GM12878 (cell line): ENCODE measurements at regions of chr6 and their contacts with region 1.

Region 1: DNA sequence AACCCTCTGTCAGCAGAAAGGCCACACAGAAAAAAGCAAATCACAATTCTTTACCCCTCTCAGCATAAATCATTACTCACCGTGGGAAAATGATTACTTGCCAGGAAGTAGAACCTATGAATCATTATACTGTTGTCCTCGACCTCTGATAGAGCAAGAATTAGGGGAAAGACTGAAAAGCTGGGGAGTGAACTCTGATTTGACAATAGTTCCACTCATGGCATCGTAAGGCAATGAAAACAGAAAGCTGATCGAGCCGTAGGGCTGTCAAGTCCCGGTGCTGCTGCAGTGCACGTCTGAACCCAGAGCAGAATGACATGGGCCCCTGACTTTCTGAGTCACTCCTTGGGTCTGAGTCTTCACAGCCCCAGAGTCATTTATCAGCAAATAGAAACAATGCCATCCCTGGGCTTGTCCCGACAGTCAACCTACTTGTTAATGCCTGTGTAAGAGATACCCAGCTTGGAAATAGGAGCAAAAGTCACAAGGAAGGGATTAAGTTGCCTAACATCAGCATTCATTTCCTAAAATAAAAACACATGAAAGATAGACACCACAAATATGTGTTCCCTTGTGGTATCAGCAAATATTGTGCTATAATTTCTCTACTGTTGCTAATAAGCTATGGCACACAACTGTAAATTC is 224.8 kb upstream of the MARCKS start:
- DNase-seq: peak; percentile 91
- ATAC-seq: peak; percentile 54
- H3K4me3 ChIP-seq: peak overlapping the region; percentile 19; the same call in 1 of the 2 replicates
- H3K27ac ChIP-seq: peak overlapping the region; percentile 100
- H3K4me1 ChIP-seq: peaks cover 77% of the 10 kb centered on the region
- H3K27me3 ChIP-seq: no peaks in the 10 kb centered on the region
- CTCF ChIP-seq: no peak
- EP300 ChIP-seq: 0 out of 4 replicates have a peak, but pooled peaks of 1 of the 2 experiments have one; percentile 50
- POLR2A ChIP-seq: peak; percentile 88
- RAD21 ChIP-seq: 0 out of 2 replicates have a peak, but pooled peaks have one; percentile 1

Region 2: GRCh38 chr6:111841822-111842221 is 1790.5 kb before region 1 on chr6:
- CTCF ChIA-PET with region 1: no interaction called
- POLR2A ChIA-PET with region 1: no interaction called
- RAD21 ChIA-PET with region 1: no interaction called
- SMC1A ChIA-PET with region 1: no interaction called
- in situ Hi-C with region 1: loop called (anchors 25 kb)
- intact Hi-C with region 1: no loop called
- DNase-seq: peak; percentile 60
- ATAC-seq: no peak
- H3K4me3 ChIP-seq: no peak overlapping the region; the same call in 1 of the 2 replicates
- H3K27ac ChIP-seq: peak overlapping the region; percentile 72
- H3K4me1 ChIP-seq: peaks cover 82% of the 10 kb centered on the region
- H3K27me3 ChIP-seq: no peaks in the 10 kb centered on the region
- CTCF ChIP-seq: no peak
- EP300 ChIP-seq: peak; percentile 36 to 52; a peak in 2 of 4 replicates
- POLR2A ChIP-seq: no peak
- RAD21 ChIP-seq: no peak

Region 3: GRCh38 chr6:113292646-113293422 is 339.5 kb before region 1 on chr6:
- CTCF ChIA-PET with region 1: no interaction called
- POLR2A ChIA-PET with region 1: interaction called, 3 read pairs
- RAD21 ChIA-PET with region 1: interaction called, 14 read pairs
- SMC1A ChIA-PET with region 1: interaction called, 6 read pairs
- in situ Hi-C with region 1: no loop called
- intact Hi-C with region 1: loop called (anchors 5 kb)
- DNase-seq: peak; percentile 31
- ATAC-seq: peak; percentile 96
- H3K4me3 ChIP-seq: no peak overlapping the region
- H3K27ac ChIP-seq: no peak overlapping the region
- H3K4me1 ChIP-seq: no peaks in the 10 kb centered on the region; the same call in 1 of the 2 replicates
- H3K27me3 ChIP-seq: no peaks in the 10 kb centered on the region
- CTCF ChIP-seq: no peak
- EP300 ChIP-seq: peak; percentile 58 to 70; a peak in 2 of 4 replicates
- POLR2A ChIP-seq: no peak
- RAD21 ChIP-seq: no peak

Region 4: DNA sequence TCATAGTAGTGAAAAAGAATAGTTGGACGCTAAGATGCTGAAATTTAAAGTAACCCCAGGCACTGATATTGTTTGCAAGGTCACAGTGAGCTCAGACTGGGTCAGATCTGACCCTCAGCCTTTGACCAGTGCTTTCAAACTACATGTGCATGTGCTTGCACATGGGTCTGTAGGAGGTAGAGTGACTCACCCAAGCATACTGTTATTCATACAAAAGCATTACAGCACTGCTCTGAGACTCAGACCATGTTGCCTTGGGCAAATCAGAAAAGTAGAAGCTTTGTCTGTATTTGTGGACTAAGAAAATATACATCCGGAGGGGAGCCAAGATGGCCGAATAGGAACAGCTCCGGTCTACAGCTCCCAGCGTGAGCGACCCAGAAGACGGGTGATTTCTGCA is 101.5 kb before region 1 on chr6:
- CTCF ChIA-PET with region 1: no interaction called
- POLR2A ChIA-PET with region 1: no interaction called
- RAD21 ChIA-PET with region 1: no interaction called
- SMC1A ChIA-PET with region 1: no interaction called
- in situ Hi-C with region 1: no loop called
- intact Hi-C with region 1: no loop called
- DNase-seq: no peak
- ATAC-seq: no peak
- H3K4me3 ChIP-seq: no peak overlapping the region
- H3K27ac ChIP-seq: no peak overlapping the region
- H3K4me1 ChIP-seq: no peaks in the 10 kb centered on the region
- H3K27me3 ChIP-seq: no peaks in the 10 kb centered on the region
- CTCF ChIP-seq: no peak
- EP300 ChIP-seq: no peak
- POLR2A ChIP-seq: no peak
- RAD21 ChIP-seq: no peak

Region 5: DNA sequence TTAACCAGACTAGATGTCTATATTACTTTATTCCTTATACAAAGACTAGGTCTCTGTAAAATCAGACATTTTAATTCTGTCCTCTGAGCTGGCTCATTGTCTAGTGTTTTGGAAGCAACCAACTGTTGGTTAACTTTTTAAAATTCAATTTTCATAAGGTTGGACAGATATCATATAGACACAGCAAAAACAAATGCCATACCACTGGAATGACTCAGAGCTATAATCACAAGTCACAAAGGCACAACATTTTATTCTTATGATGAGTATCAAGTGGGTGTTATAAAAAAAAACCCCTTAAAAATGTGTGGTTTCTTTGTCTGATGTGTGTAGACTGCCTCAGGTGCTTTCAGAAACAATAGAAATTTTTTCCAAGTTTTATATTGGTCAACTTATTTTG is 71.4 kb before region 1 on chr6:
- CTCF ChIA-PET with region 1: no interaction called
- POLR2A ChIA-PET with region 1: no interaction called
- RAD21 ChIA-PET with region 1: no interaction called
- SMC1A ChIA-PET with region 1: no interaction called
- in situ Hi-C with region 1: no loop called
- intact Hi-C with region 1: no loop called
- DNase-seq: no peak
- ATAC-seq: peak; percentile 34
- H3K4me3 ChIP-seq: no peak overlapping the region
- H3K27ac ChIP-seq: no peak overlapping the region
- H3K4me1 ChIP-seq: peaks cover 7% of the 10 kb centered on the region
- H3K27me3 ChIP-seq: no peaks in the 10 kb centered on the region
- CTCF ChIP-seq: no peak
- EP300 ChIP-seq: no peak
- POLR2A ChIP-seq: no peak
- RAD21 ChIP-seq: no peak

Region 6: GRCh38 chr6:113620386-113620785 is 12.0 kb before region 1 on chr6:
- CTCF ChIA-PET with region 1: interaction called, 6 read pairs
- POLR2A ChIA-PET with region 1: interaction called, 40 read pairs
- RAD21 ChIA-PET with region 1: interaction called, 43 read pairs
- SMC1A ChIA-PET with region 1: interaction called, 50 read pairs
- in situ Hi-C with region 1: no loop called
- intact Hi-C with region 1: no loop called
- DNase-seq: no peak
- ATAC-seq: no peak
- H3K4me3 ChIP-seq: no peak overlapping the region
- H3K27ac ChIP-seq: no peak overlapping the region
- H3K4me1 ChIP-seq: peaks cover 25% of the 10 kb centered on the region
- H3K27me3 ChIP-seq: no peaks in the 10 kb centered on the region
- CTCF ChIP-seq: no peak
- EP300 ChIP-seq: no peak
- POLR2A ChIP-seq: no peak
- RAD21 ChIP-seq: no peak

Region 7: DNA sequence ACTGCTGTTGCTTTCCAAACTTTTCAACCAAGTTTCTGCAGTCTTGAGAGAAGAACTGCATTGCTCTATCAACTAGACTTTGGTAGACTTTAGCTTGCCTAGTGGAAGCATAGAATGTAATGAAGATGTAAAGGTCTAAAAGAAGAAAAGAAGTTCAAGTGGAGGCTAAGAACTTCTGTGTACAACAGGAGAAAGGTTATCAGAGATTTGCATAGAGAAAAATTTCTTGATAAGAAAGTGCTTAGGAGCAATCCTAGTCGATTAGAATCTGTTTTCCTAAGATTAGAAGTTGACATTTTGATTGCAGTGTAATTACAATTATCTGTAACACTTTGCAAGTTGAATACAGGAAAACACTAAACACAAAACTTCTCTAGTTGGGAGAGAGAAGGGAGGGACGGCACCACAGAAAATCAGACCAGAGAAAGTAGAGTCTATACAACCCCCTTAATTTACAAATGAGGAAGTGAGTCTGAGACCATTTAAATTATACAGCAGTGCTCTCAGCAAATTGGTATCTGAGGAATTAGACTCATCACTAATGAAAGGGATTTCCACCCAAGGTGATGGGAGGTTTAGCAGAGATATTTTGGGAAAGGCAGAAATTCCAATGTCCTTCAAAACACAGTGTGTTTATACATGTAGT is 30.5 kb after region 1 on chr6:
- CTCF ChIA-PET with region 1: interaction called, 5 read pairs
- POLR2A ChIA-PET with region 1: interaction called, 3 read pairs
- RAD21 ChIA-PET with region 1: interaction called, 19 read pairs
- SMC1A ChIA-PET with region 1: interaction called, 77 read pairs
- in situ Hi-C with region 1: no loop called
- intact Hi-C with region 1: no loop called
- DNase-seq: no peak
- ATAC-seq: peak; percentile 89
- H3K4me3 ChIP-seq: no peak overlapping the region; the same call in 1 of the 2 replicates
- H3K27ac ChIP-seq: no peak overlapping the region; the same call in 1 of the 2 replicates
- H3K4me1 ChIP-seq: peaks cover 39% of the 10 kb centered on the region
- H3K27me3 ChIP-seq: no peaks in the 10 kb centered on the region
- CTCF ChIP-seq: no peak
- EP300 ChIP-seq: no peak; a peak in 1 of 4 replicates
- POLR2A ChIP-seq: no peak
- RAD21 ChIP-seq: no peak

Region 8: DNA sequence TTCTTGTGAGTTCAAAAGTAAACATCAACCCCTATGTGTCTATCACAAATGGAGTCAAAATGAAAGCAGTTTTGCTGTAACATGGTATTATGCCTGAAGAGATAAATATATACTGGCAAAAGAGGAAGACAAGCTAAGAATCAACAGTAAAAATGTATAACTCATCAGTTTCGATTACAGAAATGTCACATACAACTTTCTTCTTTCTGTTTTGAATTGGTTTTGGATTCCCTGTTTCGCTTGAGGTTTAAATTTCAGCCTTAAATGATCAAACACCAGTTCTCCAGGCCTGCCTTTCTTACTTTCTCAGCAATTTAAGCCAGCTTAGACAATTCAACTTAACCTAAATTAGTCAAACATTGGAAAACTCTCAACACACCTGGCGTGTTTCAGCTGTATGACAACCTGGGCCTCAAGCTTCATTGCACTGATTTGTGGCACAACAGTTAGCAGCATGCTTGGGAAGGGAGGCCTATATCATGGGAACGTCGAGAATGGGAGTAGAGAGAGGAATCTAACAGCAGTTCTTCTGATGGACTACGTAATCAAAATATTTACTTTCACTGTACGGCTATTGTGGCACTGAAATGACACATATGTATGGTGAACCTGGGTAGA is 172.9 kb after region 1 on chr6:
- CTCF ChIA-PET with region 1: interaction called, 4 read pairs
- POLR2A ChIA-PET with region 1: interaction called, 6 read pairs
- RAD21 ChIA-PET with region 1: interaction called, 11 read pairs
- SMC1A ChIA-PET with region 1: interaction called, 5 read pairs
- in situ Hi-C with region 1: loop called (anchors 5 kb)
- intact Hi-C with region 1: loop called (anchors 5 kb)
- DNase-seq: peak; percentile 71
- ATAC-seq: peak; percentile 92
- H3K4me3 ChIP-seq: peak overlapping the region; percentile 56; the same call in 1 of the 2 replicates
- H3K27ac ChIP-seq: peak overlapping the region; percentile 71; the same call in 1 of the 2 replicates
- H3K4me1 ChIP-seq: peaks cover 29% of the 10 kb centered on the region
- H3K27me3 ChIP-seq: no peaks in the 10 kb centered on the region
- CTCF ChIP-seq: no peak
- EP300 ChIP-seq: peak; percentile 45 to 83; a peak in 3 of 4 replicates
- POLR2A ChIP-seq: no peak
- RAD21 ChIP-seq: no peak

Region 9: DNA sequence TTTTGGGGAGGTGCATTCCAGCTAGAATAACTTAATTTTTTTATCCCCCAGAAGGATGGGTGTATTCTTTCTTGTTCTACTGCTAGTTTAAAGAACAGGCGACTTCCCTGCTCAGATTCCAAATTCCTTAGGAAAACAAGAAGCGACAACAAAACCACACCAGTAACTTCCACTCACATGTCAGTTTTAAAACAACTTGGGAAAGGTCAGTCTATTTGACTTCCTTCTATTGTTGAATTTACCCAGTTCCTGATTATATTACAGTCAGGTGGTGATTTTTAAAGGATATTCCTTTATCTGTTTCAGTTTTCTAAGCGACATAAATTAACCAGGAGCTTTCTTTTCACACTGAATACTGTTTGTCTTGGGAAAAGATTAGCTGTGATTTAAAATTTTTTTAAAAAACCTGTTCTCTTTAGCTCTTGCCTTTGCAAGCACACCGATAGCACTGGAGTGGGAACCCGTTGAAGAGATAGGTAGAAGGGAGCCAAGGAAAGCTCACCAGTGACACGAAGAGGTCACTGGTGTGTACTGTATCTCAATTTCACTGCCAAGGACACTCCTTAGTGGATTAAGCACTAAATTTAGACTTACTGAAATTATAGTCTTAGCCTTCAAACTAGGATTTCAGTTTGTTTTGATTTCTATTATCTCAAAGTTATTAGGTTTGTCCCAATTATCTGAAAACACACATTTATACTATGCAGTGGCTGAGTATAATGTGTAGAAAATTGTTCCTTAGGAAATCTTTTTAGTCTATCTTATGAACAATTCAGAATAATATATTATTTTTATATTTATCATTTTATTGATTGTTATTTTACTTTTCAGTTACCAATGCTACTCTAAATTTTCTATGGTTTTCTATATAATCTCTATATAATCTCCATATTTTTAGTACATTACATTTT is 247.1 kb after region 1 on chr6:
- CTCF ChIA-PET with region 1: interaction called, 16 read pairs
- POLR2A ChIA-PET with region 1: no interaction called
- RAD21 ChIA-PET with region 1: interaction called, 21 read pairs
- SMC1A ChIA-PET with region 1: interaction called, 23 read pairs
- in situ Hi-C with region 1: no loop called
- intact Hi-C with region 1: no loop called
- DNase-seq: peak; percentile 47
- ATAC-seq: peak; percentile 99
- H3K4me3 ChIP-seq: no peak overlapping the region
- H3K27ac ChIP-seq: no peak overlapping the region
- H3K4me1 ChIP-seq: no peaks in the 10 kb centered on the region
- H3K27me3 ChIP-seq: no peaks in the 10 kb centered on the region
- CTCF ChIP-seq: peak; percentile 83 to 89 (median 84)
- EP300 ChIP-seq: no peak
- POLR2A ChIP-seq: no peak
- RAD21 ChIP-seq: peak; percentile 97